ENCODE measurements at regions of chr11 and their contacts with region 1.

Region 1: GRCh38 chr11:47373876-47374720 is 4.2 kb downstream of the SPI1 start:
- DNase-seq: peak; percentile 67 to 92 (median 84)
- ATAC-seq: peak; percentile 96 to 99
- H3K4me3 Mint-ChIP-seq: no peak overlapping the region
- H3K27ac Mint-ChIP-seq: peak overlapping the region in 5 of 10 donors; percentile 13 to 72 (median 53)
- H3K4me1 Mint-ChIP-seq: peaks cover 4 to 23% (median 8%) of the 10 kb centered on the region in 4 donors
- H3K27me3 Mint-ChIP-seq: no peaks in the 10 kb centered on the region

Region 2: GRCh38 chr11:46593550-46594373 is 780.3 kb before region 1 on chr11 and contains the start of gene AMBRA1:
- POLR2A ChIA-PET with region 1: no interaction called
- DNase-seq: peak; percentile 53 to 87 (median 80)
- ATAC-seq: peak; percentile 95 to 96
- H3K4me3 Mint-ChIP-seq: peak within 1 kb of the TSS; percentile 93 to 99 (median 96)
- H3K27ac Mint-ChIP-seq: peak within 1 kb of the TSS; percentile 91 to 97 (median 96)
- H3K4me1 Mint-ChIP-seq: peaks cover 22 to 50% (median 47%) of the 10 kb centered on the region in 4 donors
- H3K27me3 Mint-ChIP-seq: no peaks in the 10 kb centered on the region
- polyA plus RNA-seq, gene AMBRA1: 6.1 to 16.3 (median 7.4) TPM

Region 3: DNA sequence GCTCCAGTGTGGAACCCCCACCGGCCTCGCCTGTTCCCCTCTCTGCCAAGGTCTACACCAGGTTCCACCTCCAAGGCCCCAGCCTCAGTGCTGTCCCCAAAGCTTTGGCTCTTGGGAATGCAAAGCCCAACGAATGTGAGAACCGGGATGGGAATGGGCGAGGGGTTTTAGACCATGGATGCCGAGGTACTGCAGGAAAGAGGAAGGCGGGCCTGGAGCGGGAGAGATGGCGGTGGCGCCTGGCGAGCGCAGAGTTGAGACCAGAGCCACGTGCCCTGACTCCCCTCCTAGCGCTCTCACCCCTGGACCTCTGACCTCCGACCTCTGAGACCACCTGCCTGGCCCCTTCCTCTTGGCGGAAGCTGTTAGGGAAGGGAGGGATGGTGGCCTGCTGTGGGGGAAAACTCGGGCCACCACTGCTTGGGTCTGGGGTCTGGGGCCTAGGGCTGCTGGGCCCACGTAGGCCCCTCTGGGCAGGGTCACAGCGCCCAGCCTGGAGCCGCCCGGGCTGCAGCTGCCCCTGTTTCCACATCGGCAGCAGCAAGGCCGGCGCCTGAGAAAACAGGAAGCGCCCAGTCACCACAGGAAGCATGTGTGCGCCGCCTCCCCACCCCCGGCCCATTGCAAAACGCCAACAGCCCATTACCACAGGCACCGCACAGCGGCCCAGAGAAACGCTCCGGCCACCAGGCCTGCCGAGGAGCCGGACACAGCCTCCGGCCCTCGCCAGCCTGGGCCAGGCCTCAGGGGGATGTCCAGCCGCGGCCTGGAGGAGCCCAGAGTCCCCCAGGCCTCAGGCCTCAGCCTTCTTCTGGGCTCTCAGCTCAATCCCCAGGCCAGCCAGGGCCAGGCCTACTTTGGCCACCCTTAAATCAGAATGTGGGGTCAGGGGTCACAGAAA is 20.5 kb after region 1 on chr11:
- POLR2A ChIA-PET with region 1: interaction called, 39 read pairs
- DNase-seq: peak in 6 of 10 donors; percentile 16 to 64 (median 40)
- ATAC-seq: peak; percentile 81 to 90
- H3K4me3 Mint-ChIP-seq: peak overlapping the region; percentile 59 to 85 (median 74)
- H3K27ac Mint-ChIP-seq: peak overlapping the region; percentile 91 to 96 (median 94)
- H3K4me1 Mint-ChIP-seq: peaks cover 21 to 83% (median 68%) of the 10 kb centered on the region in 4 donors
- H3K27me3 Mint-ChIP-seq: no peaks in the 10 kb centered on the region

Region 4: DNA sequence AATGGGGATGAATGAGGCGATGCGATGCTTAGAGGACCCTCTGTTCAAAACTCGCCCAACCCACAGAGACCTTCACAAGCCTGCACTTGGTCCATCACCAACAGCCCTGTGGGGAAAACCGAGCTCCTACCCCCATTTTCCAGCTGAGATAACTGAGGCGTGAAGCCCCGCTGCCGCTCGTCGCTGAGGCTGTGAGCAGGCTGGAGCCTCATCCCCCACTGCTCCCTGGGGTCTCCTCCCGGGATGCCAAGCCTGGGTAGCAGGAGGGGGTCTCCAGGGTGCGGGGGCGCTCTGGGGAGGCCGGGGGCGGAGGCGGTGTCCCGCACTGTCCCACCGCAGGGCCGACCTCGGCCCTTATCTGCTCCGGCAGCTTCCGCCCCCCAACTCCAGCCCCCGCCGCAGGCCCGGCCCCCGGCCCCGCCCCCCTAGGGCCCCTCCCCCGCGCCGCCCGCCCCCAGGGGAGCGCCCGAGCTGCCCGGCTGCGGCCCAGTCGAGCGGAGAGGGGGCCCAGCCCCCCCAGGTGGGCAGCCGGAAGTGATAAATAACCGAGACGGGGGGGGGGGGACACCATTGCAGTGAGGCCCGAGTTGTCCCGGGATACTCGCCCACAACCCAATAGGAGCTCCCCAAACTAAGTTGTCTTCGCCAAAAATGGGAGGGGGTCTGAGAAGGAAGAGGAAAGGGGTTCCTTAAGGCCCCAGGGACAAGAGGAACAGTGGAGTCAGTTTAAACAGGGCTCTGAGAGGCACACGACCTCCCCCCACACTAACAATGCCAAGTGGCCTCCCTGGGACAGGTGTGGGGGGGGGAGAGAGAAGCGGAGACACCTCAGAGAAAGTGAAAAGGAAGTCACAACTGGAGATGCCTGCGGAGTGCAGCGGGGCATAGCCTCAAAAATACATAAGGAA is 26.0 kb after region 1 on chr11:
- POLR2A ChIA-PET with region 1: interaction called, 39 read pairs
- DNase-seq: peak in 7 of 10 donors; percentile 23 to 63 (median 44)
- ATAC-seq: peak; percentile 80 to 85
- H3K4me3 Mint-ChIP-seq: peak overlapping the region; percentile 80 to 90 (median 87)
- H3K27ac Mint-ChIP-seq: peak overlapping the region; percentile 87 to 97 (median 93)
- H3K4me1 Mint-ChIP-seq: peaks cover 17 to 55% (median 39%) of the 10 kb centered on the region in 4 donors
- H3K27me3 Mint-ChIP-seq: no peaks in the 10 kb centered on the region

Measured in naive thymus-derived CD8-positive, alpha-beta T cell (primary cell).